ENCODE measurements at regions of chr20 and their contacts with region 1.

Region 1: GRCh38 chr20:36493013-36493800 is 48.1 kb upstream of the MYL9 start:
- DNase-seq: peak; percentile 35
- H3K4me3 Mint-ChIP-seq: no peak overlapping the region
- H3K27ac Mint-ChIP-seq: peak overlapping the region; percentile 34
- H3K4me1 Mint-ChIP-seq: peaks cover 40% of the 10 kb centered on the region
- H3K27me3 Mint-ChIP-seq: no peaks in the 10 kb centered on the region

Region 2: DNA sequence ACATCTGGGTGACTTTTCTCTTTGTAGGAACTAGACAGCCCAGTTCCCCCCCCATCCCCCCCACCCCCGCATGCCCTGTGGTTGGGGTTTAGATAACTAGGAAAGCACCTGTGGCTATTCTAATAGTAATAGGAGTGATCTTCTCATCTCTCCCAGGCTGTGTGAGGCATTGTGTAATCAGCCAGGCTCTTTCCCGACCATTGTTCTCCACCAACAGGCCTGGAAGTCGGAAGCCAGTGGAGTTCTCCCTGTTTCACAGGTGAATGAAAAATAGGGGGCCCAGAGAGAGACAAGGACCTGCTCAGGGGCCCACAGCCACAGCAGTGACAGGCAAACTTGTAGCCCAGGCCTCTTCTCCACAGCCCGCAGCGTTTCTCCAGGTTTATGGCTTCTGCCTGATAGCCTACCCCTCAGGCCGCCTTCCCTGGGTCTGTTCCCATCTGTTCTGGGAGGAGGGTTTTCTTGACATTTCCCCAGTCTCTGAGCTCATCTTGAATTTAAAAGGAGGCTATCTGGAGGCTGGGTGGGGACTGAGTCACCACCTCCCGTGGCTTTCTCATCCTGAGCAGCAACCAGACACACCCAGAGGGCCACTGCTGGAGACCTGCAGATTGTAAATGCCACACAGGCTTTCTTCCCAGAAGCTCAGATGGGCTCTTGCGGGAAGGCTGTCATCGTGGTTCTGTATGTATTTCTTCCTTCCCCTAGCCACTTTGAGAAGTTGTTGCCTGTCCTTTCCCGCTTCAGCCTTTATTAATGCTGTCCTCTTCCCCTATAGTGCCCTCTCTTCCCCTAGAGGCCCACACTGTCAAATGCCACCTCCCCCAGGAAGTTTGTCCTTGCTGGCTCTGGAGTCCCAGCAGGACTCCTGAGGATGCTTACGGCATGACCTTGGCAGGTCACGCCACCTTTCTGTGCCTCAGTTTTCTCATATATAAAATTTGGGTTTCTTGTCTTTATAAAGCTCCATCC is 27.8 kb before region 1 on chr20:
- CTCF ChIA-PET with region 1: interaction called, 8 read pairs
- POLR2A ChIA-PET with region 1: interaction called, 20 read pairs
- DNase-seq: peak; percentile 63
- H3K4me3 Mint-ChIP-seq: peak overlapping the region; percentile 64
- H3K27ac Mint-ChIP-seq: peak overlapping the region; percentile 94
- H3K4me1 Mint-ChIP-seq: peaks cover 78% of the 10 kb centered on the region
- H3K27me3 Mint-ChIP-seq: no peaks in the 10 kb centered on the region

Region 3: DNA sequence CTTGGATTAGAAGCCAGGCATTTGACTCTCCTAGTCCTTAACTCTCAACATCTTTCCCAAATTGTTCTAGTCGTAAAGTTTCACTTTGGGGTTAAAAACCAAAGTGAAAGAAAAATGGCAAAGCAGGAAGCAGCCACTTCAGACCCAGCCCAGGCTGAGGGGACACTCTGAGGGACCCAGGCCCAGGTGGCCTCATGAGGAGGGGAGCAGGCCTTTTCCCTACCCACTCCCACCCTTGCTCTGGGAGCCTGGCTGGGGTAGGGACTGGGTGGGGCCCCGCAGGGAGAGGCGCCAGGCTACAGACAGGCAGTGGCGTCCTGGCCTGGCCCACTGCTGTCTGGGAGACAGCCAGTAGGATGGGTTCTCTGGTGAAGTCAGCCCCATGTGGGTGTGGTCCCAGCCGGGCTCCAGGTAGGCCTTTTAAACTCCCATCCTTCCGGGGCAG is 20.5 kb before region 1 on chr20:
- CTCF ChIA-PET with region 1: interaction called, 10 read pairs
- POLR2A ChIA-PET with region 1: interaction called, 16 read pairs
- DNase-seq: peak; percentile 48
- H3K4me3 Mint-ChIP-seq: peak overlapping the region; percentile 64
- H3K27ac Mint-ChIP-seq: peak overlapping the region; percentile 76
- H3K4me1 Mint-ChIP-seq: peaks cover 59% of the 10 kb centered on the region
- H3K27me3 Mint-ChIP-seq: no peaks in the 10 kb centered on the region

Region 4: DNA sequence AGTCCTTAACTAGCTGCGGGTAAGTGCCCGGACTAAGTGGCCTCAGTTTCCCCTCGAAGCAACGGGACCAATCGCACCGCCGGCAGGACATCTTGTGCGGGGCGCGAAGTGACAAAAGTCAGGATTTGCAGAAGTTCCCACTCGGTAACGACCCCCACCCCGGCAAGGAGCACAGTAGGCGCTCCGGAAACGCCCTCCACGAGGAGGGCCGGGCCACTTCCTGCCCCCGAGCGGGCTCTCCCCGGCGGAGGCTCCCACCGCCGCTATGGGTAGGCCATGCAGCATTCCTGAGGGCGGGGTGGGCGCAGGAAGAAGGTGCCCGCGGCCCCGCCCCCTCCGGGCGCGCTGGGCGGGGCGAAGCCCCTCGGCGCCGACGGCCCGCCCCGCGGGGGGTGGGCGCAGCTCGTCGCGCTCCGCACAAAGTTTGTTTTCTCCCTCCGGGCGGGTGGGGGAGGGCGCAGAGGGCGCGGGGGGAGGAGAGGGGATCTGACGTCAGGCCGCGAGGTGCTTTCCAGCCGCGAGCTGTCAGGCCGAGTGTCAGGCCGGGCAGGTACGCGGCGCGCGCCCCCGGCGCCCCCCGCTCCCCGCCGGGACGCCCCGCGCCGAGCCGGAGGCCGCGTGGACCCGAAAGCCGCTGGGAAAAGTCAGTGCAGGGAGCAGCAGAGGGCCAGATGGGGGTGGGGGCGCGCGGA is 80.0 kb after region 1 on chr20 and contains the start of gene TGIF2:
- CTCF ChIA-PET with region 1: interaction called, 3 read pairs
- POLR2A ChIA-PET with region 1: interaction called, 13 read pairs
- DNase-seq: peak; percentile 86
- H3K4me3 Mint-ChIP-seq: peak within 1 kb of the TSS; percentile 92
- H3K27ac Mint-ChIP-seq: peak within 1 kb of the TSS; percentile 87
- H3K4me1 Mint-ChIP-seq: peaks cover 34% of the 10 kb centered on the region
- H3K27me3 Mint-ChIP-seq: no peaks in the 10 kb centered on the region
- total RNA-seq, gene TGIF2: 28.0 to 33.5 TPM